ENCODE measurements at regions of chr9 and their contacts with region 1.

Region 1: DNA sequence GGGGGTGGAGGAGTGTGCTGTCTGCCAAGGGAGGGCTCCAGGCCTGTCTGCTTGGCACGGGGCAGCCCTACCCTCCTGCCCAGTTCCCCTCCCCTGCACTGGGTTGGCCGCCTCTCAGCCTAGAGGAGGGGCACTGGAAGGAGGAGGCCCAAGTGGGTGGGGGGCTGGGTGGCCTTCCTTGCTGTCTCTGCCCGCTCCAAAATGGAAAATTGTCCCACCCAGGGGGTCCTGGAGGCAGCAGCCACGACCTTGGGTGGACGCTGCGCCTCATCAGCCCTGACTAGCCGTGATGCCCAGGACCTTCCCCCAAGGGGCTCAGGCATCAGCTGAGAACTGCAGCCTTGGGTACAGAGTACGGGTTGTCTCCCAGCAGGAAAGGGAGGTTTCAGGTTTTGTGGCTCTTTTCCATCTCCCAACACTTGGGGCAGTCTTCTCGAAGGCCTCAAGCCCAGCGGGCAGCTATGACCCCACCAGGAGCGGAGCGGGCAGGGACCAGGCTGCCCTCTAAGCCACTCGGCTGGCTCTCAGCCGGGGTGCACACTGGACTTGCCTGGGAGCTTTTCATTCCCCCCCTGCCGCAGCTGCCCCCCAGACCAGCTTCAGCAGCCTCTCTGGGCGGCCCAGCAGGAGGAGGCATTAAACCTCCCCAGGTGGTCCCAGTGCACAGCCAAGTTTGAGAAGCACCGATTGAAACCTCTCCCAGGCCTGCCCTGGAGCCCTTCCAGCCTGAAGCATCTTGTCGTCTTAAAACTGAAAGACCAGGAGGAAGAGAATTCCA is 20.6 kb downstream of the NTNG2 start:
- H3K4me3 ChIP-seq: no peak overlapping the region
- H3K27ac ChIP-seq: no peak overlapping the region
- H3K4me1 ChIP-seq: no peaks in the 10 kb centered on the region
- CTCF ChIP-seq: peak; percentile 55; the same call in 1 of the 2 replicates

Region 2: DNA sequence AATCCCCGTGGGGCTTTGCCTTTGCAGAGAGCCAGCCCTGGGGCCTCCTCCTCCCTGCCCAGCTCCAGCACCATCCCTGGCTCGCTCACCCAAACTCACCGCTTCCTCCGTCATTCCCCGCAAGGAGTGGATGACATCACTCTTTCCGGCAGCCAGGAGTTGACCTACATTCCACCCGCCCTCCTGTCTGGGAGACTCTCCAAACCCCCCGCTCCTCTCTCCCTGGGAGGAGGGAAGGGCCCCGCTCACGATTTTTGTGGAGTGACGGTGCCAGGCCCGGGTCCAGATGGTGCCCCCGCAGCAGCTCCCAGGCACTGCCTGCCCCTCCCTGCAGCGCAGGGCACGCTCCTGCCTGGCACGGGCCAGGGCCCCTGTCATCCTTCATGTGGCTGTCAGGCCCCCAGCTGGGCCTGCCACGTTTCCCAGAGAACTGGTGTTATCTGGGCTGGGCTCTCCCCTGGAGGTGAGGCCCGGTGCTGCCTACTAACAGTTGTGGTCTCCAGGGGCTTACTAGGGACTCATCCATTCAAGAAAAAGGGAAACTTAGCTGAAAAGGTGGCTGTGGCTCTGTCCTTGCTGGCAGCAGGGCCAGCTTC is 31.6 kb after region 1 on chr9:
- CTCF ChIA-PET with region 1: interaction called, 4 read pairs
- POLR2A ChIA-PET with region 1: interaction called, 12 read pairs
- H3K4me3 ChIP-seq: peak overlapping the region; percentile 29
- H3K27ac ChIP-seq: no peak overlapping the region
- H3K4me1 ChIP-seq: peaks cover 6% of the 10 kb centered on the region; the same call in 1 of the 2 replicates
- CTCF ChIP-seq: no peak